Head of caudate nucleus (tissue), 42 donors: ENCODE measurements at regions of chr1 and their contacts with region 1.

Region 1: DNA sequence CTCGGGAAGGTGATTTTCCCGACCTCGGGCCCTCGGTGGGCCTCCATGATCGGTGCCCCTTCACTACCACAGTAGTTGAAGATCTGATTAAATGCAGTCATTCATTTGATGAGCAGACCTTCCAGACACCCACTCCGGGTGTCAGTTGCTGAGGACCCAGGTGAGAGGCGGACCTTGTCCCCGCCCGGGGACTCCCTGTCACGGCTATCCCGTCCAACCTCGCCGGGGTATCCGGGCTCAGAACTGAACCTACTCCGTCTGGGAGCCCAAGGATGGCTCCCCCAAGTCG is 22.6 kb downstream of the RNU1-3 start:
- DNase-seq: peak in 1 of 42 donors; percentile 60

Region 2: GRCh38 chr1:16167331-16168143 is 476.6 kb before region 1 on chr1:
- intact Hi-C with region 1: no loop called
- DNase-seq: peak in 9 of 42 donors; percentile 11 to 47 (median 31)

Region 3: GRCh38 chr1:16913833-16914662 is 269.9 kb after region 1 on chr1:
- intact Hi-C with region 1: loop called (anchors 10 kb)
- DNase-seq: peak; percentile 83 to 100 (median 98)